ENCODE measurements at regions of chr15 and their contacts with region 1.

Region 1: GRCh38 chr15:38690689-38691332 is 126.2 kb upstream of the RASGRP1 start:
- DNase-seq: peak; percentile 63 to 90 (median 83)
- ATAC-seq: peak; percentile 44
- H3K4me3 ChIP-seq: no peak overlapping the region
- H3K4me3 Mint-ChIP-seq: no peak overlapping the region
- H3K27ac ChIP-seq: no peak overlapping the region
- H3K27ac Mint-ChIP-seq: peak overlapping the region; percentile 91
- H3K4me1 ChIP-seq: peaks cover 58% of the 10 kb centered on the region
- H3K4me1 Mint-ChIP-seq: peaks cover 68% of the 10 kb centered on the region
- H3K27me3 ChIP-seq: no peaks in the 10 kb centered on the region
- H3K27me3 Mint-ChIP-seq: no peaks in the 10 kb centered on the region
- CTCF ChIP-seq: peak; percentile 92

Region 2: DNA sequence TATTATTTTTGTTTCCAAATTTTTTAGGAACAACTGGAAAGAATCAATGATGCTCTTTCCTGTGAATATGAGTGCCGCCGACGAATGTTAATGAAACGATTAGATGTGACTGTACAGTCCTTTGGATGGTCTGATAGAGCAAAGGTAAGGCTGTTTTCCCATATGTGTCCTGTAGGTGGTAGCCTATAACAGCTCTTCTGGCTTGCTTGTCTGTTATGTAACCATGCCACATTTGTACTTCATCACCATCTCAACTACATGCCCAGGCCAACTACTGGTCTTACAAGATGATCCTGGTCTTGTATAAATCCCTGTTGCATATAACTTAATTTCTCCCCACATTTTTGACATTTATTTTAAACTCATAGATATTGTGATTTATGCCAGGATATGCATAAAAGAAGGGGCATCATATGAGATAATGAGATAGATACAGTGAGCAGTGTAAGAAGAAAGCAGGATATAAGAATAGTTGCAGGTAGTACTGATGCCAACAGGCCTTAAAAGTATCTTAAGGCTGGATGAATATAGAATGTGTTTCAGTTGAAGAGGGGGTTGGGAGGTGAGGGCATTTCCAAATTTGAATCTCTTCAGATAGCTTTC is 216.6 kb before region 1 on chr15:
- CTCF ChIA-PET with region 1: interaction called, 142 read pairs
- POLR2A ChIA-PET with region 1: no interaction called
- intact Hi-C with region 1: loop called (anchors 1 kb)
- DNase-seq: peak in 7 of 9 experiments; percentile 13 to 85 (median 32)
- ATAC-seq: peak; percentile 99
- H3K4me3 ChIP-seq: no peak overlapping the region
- H3K4me3 Mint-ChIP-seq: no peak overlapping the region
- H3K27ac ChIP-seq: peak overlapping the region in 1 of 2 experiments; percentile 17
- H3K27ac Mint-ChIP-seq: peak overlapping the region; percentile 37
- H3K4me1 ChIP-seq: no peaks in the 10 kb centered on the region
- H3K4me1 Mint-ChIP-seq: peaks cover 9% of the 10 kb centered on the region
- H3K27me3 ChIP-seq: no peaks in the 10 kb centered on the region
- H3K27me3 Mint-ChIP-seq: no peaks in the 10 kb centered on the region
- CTCF ChIP-seq: peak; percentile 74

Region 3: GRCh38 chr15:38508647-38509046 is 182.2 kb before region 1 on chr15:
- CTCF ChIA-PET with region 1: interaction called, 44 read pairs
- POLR2A ChIA-PET with region 1: interaction called, 11 read pairs
- intact Hi-C with region 1: no loop called
- DNase-seq: no peak
- ATAC-seq: no peak
- H3K4me3 ChIP-seq: no peak overlapping the region
- H3K4me3 Mint-ChIP-seq: no peak overlapping the region
- H3K27ac ChIP-seq: peak overlapping the region in 1 of 2 experiments; percentile 17
- H3K27ac Mint-ChIP-seq: peak overlapping the region; percentile 80
- H3K4me1 ChIP-seq: no peaks in the 10 kb centered on the region
- H3K4me1 Mint-ChIP-seq: peaks cover 10% of the 10 kb centered on the region
- H3K27me3 ChIP-seq: no peaks in the 10 kb centered on the region
- H3K27me3 Mint-ChIP-seq: no peaks in the 10 kb centered on the region
- CTCF ChIP-seq: no peak

Region 4: DNA sequence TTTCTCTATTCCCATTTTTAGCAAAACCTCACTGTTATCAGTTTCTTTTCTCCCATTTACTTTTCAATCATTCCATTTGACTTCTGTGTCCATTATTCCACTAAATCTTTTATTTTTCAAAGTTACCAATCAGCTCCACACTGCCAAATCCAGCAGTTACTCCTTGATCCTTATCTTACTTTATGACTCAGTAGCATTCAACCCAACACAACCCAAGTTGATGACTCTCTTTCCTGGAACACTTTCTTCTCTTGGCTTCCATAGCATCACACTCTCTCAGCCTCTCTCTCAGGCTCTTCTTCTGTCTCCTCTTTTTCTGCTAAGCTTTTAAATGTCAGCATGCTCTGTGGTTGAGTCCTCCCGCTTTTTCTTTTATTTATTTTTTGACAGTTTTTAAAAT is 162.5 kb before region 1 on chr15:
- CTCF ChIA-PET with region 1: interaction called, 14 read pairs
- POLR2A ChIA-PET with region 1: no interaction called
- intact Hi-C with region 1: no loop called
- DNase-seq: no peak
- ATAC-seq: no peak
- H3K4me3 ChIP-seq: no peak overlapping the region
- H3K4me3 Mint-ChIP-seq: no peak overlapping the region
- H3K27ac ChIP-seq: no peak overlapping the region
- H3K27ac Mint-ChIP-seq: peak overlapping the region; percentile 75
- H3K4me1 ChIP-seq: peaks cover 40% of the 10 kb centered on the region
- H3K4me1 Mint-ChIP-seq: peaks cover 88% of the 10 kb centered on the region
- H3K27me3 ChIP-seq: no peaks in the 10 kb centered on the region
- H3K27me3 Mint-ChIP-seq: no peaks in the 10 kb centered on the region
- CTCF ChIP-seq: no peak

Region 5: DNA sequence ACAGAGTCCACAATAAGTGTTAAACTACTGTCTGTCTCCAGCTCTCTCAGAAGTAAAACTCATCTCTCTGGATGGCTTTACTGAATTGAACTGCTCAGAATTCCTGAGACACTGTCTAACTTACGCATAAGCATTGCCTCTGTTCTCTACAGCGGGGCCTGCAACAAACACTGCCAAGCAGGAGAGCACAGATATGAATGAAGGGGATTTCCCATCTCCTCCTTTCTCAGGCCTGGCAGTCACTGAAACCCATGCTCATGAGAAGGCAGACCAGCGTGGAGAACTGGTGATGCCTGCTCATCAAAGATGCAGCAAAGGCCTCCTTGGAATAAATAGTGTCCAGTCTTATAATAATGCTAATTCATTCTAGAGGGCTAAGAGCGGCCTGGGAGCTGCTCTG is 136.5 kb before region 1 on chr15:
- CTCF ChIA-PET with region 1: interaction called, 420 read pairs
- POLR2A ChIA-PET with region 1: interaction called, 4 read pairs
- intact Hi-C with region 1: no loop called
- DNase-seq: peak in 3 of 9 experiments; percentile 34 to 72 (median 57)
- ATAC-seq: peak; percentile 60
- H3K4me3 ChIP-seq: no peak overlapping the region
- H3K4me3 Mint-ChIP-seq: peak overlapping the region; percentile 52
- H3K27ac ChIP-seq: peak overlapping the region in 1 of 2 experiments; percentile 71
- H3K27ac Mint-ChIP-seq: peak overlapping the region; percentile 91
- H3K4me1 ChIP-seq: peaks cover 92% of the 10 kb centered on the region
- H3K4me1 Mint-ChIP-seq: peaks cover 90% of the 10 kb centered on the region
- H3K27me3 ChIP-seq: no peaks in the 10 kb centered on the region
- H3K27me3 Mint-ChIP-seq: no peaks in the 10 kb centered on the region
- CTCF ChIP-seq: no peak

Region 6: GRCh38 chr15:38624244-38625205 is 66.3 kb before region 1 on chr15:
- CTCF ChIA-PET with region 1: interaction called, 29 read pairs
- POLR2A ChIA-PET with region 1: no interaction called
- intact Hi-C with region 1: no loop called
- DNase-seq: no peak
- ATAC-seq: no peak
- H3K4me3 ChIP-seq: no peak overlapping the region
- H3K4me3 Mint-ChIP-seq: no peak overlapping the region
- H3K27ac ChIP-seq: no peak overlapping the region
- H3K27ac Mint-ChIP-seq: no peak overlapping the region
- H3K4me1 ChIP-seq: peaks cover 21% of the 10 kb centered on the region
- H3K4me1 Mint-ChIP-seq: peaks cover 33% of the 10 kb centered on the region
- H3K27me3 ChIP-seq: no peaks in the 10 kb centered on the region
- H3K27me3 Mint-ChIP-seq: no peaks in the 10 kb centered on the region
- CTCF ChIP-seq: no peak

Region 7: DNA sequence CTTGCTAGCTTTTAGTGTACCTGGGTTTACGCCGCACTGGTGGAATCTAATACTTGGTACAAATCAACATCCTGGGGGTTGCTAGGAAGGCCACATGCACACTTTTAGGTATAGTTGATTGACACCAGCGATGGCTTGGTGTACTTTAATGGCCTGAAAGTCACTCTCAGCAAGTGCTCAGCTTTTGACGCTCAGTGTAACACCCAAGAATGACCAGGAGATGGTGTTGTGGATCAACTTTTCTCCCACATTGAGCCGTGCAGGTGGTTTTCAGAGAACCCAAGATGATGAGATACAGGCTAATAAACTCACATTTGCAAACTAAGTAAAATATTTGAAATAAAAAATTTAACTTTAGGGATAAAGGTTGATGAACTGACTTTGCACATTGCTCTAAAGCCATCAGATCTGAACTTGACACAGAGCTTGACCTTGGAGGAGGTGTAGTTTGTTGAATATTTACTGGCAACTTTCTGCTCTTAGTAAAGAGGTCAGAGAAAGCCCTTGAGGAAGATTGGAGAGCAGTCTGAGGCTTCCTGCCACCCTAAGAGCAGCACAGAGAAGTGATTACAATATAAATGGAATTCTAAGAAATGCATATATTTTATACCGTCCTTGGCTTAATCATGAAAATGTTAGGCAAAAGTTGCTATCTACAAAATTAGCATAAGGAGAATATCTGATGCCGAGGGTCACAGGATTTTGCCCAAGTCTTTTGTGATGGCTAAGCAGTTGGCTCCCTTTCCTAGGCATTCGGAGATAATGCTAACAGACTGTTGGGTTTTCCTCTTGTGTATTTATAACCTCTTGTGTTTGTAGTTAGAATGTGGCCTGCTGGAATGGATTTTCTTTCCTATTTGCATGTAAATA is 17.2 kb after region 1 on chr15:
- CTCF ChIA-PET with region 1: interaction called, 45 read pairs
- POLR2A ChIA-PET with region 1: interaction called, 3 read pairs
- intact Hi-C with region 1: no loop called
- DNase-seq: peak in 5 of 9 experiments; percentile 30 to 71 (median 40)
- ATAC-seq: peak; percentile 89
- H3K4me3 ChIP-seq: no peak overlapping the region
- H3K4me3 Mint-ChIP-seq: no peak overlapping the region
- H3K27ac ChIP-seq: no peak overlapping the region
- H3K27ac Mint-ChIP-seq: no peak overlapping the region
- H3K4me1 ChIP-seq: no peaks in the 10 kb centered on the region
- H3K4me1 Mint-ChIP-seq: no peaks in the 10 kb centered on the region
- H3K27me3 ChIP-seq: no peaks in the 10 kb centered on the region
- H3K27me3 Mint-ChIP-seq: no peaks in the 10 kb centered on the region
- CTCF ChIP-seq: peak; percentile 73

Region 8: GRCh38 chr15:38853608-38854007 is 162.8 kb after region 1 on chr15:
- CTCF ChIA-PET with region 1: no interaction called
- POLR2A ChIA-PET with region 1: no interaction called
- intact Hi-C with region 1: no loop called
- DNase-seq: peak in 7 of 9 experiments; percentile 2 to 51 (median 31)
- ATAC-seq: no peak
- H3K4me3 ChIP-seq: no peak overlapping the region
- H3K4me3 Mint-ChIP-seq: no peak overlapping the region
- H3K27ac ChIP-seq: no peak overlapping the region
- H3K27ac Mint-ChIP-seq: no peak overlapping the region
- H3K4me1 ChIP-seq: no peaks in the 10 kb centered on the region
- H3K4me1 Mint-ChIP-seq: no peaks in the 10 kb centered on the region
- H3K27me3 ChIP-seq: no peaks in the 10 kb centered on the region
- H3K27me3 Mint-ChIP-seq: peaks cover 23% of the 10 kb centered on the region
- CTCF ChIP-seq: no peak